ENCODE measurements at regions of chr9 and their contacts with region 1.

Region 1: GRCh38 chr9:73200694-73201452 is 49.2 kb downstream of the ANXA1 start:
- DNase-seq: peak; percentile 28
- ATAC-seq: peak; percentile 59
- H3K4me3 ChIP-seq: no peak overlapping the region
- H3K27ac ChIP-seq: no peak overlapping the region
- H3K4me1 ChIP-seq: peaks cover 5 to 10% of the 10 kb centered on the region in 2 experiments; a peak in 2 of 4 replicates
- H3K27me3 ChIP-seq: no peaks in the 10 kb centered on the region
- CTCF ChIP-seq: peak; percentile 39 to 72 (median 70); a peak in 4 of 6 replicates
- POLR2A ChIP-seq: no peak
- RAD21 ChIP-seq: peak; percentile 78

Region 2: DNA sequence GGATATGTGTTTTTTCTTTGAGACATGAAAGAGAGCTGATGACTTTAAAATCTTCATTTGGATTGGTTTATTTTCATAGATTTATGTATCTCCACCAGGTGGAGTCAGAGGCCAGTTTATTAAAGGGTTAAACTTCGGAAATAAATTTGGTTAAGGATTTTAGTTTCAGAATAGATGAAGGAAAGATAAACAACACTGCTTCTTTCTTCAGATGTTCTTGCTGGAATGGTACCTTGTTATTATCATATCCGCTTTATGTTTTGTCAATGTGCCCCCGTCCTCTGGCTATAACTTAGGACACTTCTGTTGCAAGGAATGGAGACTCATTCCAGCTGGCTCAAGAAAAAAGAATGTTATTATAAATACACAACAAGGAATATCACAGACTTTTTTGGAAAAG is 329.2 kb before region 1 on chr9:
- CTCF ChIA-PET with region 1: interaction called, 26 read pairs
- POLR2A ChIA-PET with region 1: no interaction called
- RAD21 ChIA-PET with region 1: no interaction called
- intact Hi-C with region 1: loop called (anchors 1 kb)
- DNase-seq: peak; percentile 26
- ATAC-seq: peak; percentile 42
- H3K4me3 ChIP-seq: no peak overlapping the region
- H3K27ac ChIP-seq: no peak overlapping the region
- H3K4me1 ChIP-seq: no peaks in the 10 kb centered on the region
- H3K27me3 ChIP-seq: no peaks in the 10 kb centered on the region
- CTCF ChIP-seq: peak; percentile 31 to 71 (median 69); a peak in 4 of 6 replicates
- POLR2A ChIP-seq: no peak
- RAD21 ChIP-seq: peak; percentile 76

Region 3: DNA sequence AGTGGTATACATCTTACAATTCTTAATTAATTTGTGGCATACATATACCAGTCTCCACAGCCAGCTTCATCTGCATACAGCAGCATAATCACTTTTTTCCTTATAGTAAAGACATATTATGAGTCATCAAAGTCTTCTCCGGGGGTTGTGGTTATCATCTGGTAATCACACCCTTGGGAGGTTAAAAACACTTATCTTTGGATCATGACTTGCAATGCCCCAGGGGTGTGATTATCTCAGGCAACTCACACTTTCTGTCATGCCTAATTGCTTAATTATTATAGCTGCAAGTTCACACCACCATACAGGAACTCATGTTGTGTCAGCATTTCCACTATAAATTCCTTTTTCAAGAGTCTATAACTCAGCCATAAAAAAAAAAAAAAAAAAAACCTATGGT is 169.2 kb after region 1 on chr9:
- CTCF ChIA-PET with region 1: no interaction called
- POLR2A ChIA-PET with region 1: no interaction called
- RAD21 ChIA-PET with region 1: no interaction called
- intact Hi-C with region 1: no loop called
- DNase-seq: no peak
- ATAC-seq: no peak
- H3K4me3 ChIP-seq: no peak overlapping the region
- H3K27ac ChIP-seq: no peak overlapping the region
- H3K4me1 ChIP-seq: no peaks in the 10 kb centered on the region
- H3K27me3 ChIP-seq: peaks cover 5% of the 10 kb centered on the region; the same call in 1 of the 2 replicates
- CTCF ChIP-seq: no peak
- POLR2A ChIP-seq: no peak
- RAD21 ChIP-seq: no peak

Region 4: DNA sequence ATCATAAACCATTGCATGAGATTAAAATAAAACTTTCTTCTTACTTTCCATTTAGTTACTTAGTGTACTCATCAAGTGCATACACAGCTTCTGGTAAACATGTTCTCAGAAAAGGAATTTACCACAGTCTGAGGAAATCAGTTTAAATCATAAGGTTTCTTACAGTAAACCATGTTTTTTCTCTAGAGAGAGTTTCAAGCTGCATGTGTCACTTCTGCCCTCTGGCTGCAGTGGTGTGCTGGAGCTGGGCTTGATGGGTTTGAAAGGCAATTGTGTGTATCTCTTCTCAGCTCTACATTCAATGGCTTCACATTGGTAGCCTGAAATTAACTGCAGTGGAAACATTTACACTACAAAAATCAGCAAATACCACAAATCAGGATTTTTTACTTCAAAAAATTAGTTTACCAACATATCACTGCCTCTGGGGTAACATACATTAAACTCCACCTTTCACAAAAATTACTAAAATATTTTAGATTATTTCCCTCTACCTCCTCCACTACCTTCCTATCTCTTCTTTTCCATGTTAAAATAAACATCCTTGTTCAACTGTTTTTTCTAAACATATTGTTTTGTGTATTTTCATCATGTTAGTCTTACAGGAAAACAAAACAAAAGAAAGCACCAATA is 365.1 kb after region 1 on chr9:
- CTCF ChIA-PET with region 1: interaction called, 19 read pairs
- POLR2A ChIA-PET with region 1: no interaction called
- RAD21 ChIA-PET with region 1: no interaction called
- intact Hi-C with region 1: loop called (anchors 5 kb)
- DNase-seq: no peak
- ATAC-seq: no peak
- H3K4me3 ChIP-seq: no peak overlapping the region
- H3K27ac ChIP-seq: no peak overlapping the region
- H3K4me1 ChIP-seq: no peaks in the 10 kb centered on the region
- H3K27me3 ChIP-seq: no peaks in the 10 kb centered on the region
- CTCF ChIP-seq: peak; percentile 24 to 52 (median 50); a peak in 5 of 6 replicates
- POLR2A ChIP-seq: no peak
- RAD21 ChIP-seq: peak; percentile 48; the same call in 1 of the 2 replicates

Region 5: DNA sequence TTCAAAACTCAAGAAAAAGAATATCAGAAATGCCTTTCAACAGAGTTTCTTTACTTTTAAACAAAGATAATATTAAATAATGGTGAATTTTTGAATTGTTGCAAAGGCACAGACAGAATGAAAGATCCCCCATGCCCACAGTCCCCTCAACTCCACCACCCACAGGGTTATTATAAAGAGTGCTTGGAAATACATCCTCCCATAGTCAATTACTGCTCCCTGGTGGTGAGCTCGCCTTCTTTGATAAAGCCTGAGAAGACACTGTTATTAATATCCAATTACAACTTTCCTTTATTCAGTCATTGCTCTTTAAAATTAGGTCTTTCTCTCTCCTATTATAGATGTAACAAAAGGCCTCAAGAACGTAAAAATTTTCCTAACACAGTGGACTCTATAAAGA is 806.1 kb after region 1 on chr9:
- CTCF ChIA-PET with region 1: no interaction called
- POLR2A ChIA-PET with region 1: no interaction called
- RAD21 ChIA-PET with region 1: no interaction called
- intact Hi-C with region 1: loop called (anchors 10 kb)
- DNase-seq: no peak
- ATAC-seq: no peak
- H3K4me3 ChIP-seq: no peak overlapping the region
- H3K27ac ChIP-seq: no peak overlapping the region
- H3K4me1 ChIP-seq: no peaks in the 10 kb centered on the region
- H3K27me3 ChIP-seq: no peaks in the 10 kb centered on the region
- CTCF ChIP-seq: no peak
- POLR2A ChIP-seq: no peak
- RAD21 ChIP-seq: no peak

Region 6: DNA sequence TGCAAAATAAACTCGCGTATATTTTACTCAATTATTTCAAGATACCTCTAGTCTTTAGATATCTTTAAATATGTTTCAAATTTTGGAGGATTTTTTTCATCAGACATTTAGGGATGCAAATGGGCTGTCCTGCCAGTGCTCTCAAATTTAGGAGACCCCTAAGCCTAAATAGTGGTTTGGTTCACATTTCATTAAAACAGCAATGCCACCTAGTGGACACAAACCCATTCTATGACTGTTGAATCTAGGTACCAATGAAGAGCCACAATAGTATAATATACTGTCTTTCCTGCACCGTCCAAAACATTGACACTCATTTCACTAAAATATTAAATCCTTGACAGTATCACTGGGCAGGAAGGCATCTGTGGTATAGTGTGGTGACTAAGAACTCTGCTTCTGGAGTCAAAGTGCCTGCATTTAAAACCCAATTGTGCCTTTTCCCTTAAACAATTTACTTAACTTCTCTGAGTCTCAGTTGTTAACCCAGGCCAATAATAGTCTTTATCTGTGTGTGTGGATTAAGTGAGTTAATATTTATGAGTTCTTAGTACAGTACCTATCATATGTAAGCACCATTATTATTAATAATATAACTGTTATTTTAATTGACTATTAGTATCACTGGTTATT is 1444.2 kb after region 1 on chr9:
- CTCF ChIA-PET with region 1: interaction called, 4 read pairs
- POLR2A ChIA-PET with region 1: no interaction called
- RAD21 ChIA-PET with region 1: no interaction called
- intact Hi-C with region 1: loop called (anchors 5 kb)
- DNase-seq: peak; percentile 7
- ATAC-seq: peak; percentile 77
- H3K4me3 ChIP-seq: no peak overlapping the region
- H3K27ac ChIP-seq: no peak overlapping the region
- H3K4me1 ChIP-seq: no peaks in the 10 kb centered on the region
- H3K27me3 ChIP-seq: peaks cover 60% of the 10 kb centered on the region
- CTCF ChIP-seq: peak; percentile 29 to 74 (median 62); a peak in 5 of 6 replicates
- POLR2A ChIP-seq: no peak
- RAD21 ChIP-seq: peak; percentile 44

Measured in HCT116 (cell line).